Activated T-helper 1 cell treated with anti-CD3 and anti-CD28 coated beads, Interleukin-12 subunit alpha, Interleukin-12 subunit beta, Interleukin-2, Interleukin-4 antibody, amounts not matched to agents 30 ng/mL and 10 ng/mL and 1 ng/mL, durations not matched to agents 14 hours and 24 hours and 36 hours (primary cell): ENCODE measurements at regions of chr2 and their contacts with region 1.

Region 1: DNA sequence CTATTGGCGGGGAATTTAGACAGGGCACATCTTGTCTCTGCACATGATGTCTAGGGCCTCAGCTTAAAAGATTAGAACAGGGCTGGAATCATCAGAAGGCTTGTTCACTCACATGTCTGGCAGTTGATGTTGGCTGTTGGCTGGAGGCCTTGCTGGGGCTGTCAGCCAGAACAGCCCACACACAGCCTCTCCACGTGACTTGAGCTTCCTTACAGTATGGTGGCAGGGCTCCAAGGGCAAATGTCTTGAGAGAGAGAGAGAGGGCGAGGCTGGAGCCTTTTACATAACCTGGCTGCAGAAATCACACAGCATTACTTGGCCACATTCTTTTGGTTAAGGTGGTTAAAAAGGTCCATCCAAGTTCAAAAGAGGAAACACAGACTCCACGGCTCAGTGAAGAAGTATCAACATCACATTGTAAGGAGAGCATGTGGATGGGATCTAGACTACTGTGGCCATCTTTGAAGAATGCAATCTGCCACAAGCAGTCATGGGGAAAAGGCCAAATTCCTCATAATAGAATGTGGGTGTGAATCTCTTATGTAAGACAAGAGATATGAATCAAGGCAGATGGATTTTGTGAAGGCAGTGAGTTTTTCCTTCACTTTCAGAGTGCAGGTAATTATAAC is 30.4 kb downstream of the SRSF7 start:
- DNase-seq: no peak
- H3K4me3 Mint-ChIP-seq: peak overlapping the region; percentile 40
- H3K27ac Mint-ChIP-seq: peak overlapping the region; percentile 87
- H3K4me1 Mint-ChIP-seq: peaks cover 59% of the 10 kb centered on the region
- H3K27me3 Mint-ChIP-seq: no peaks in the 10 kb centered on the region

Region 2: DNA sequence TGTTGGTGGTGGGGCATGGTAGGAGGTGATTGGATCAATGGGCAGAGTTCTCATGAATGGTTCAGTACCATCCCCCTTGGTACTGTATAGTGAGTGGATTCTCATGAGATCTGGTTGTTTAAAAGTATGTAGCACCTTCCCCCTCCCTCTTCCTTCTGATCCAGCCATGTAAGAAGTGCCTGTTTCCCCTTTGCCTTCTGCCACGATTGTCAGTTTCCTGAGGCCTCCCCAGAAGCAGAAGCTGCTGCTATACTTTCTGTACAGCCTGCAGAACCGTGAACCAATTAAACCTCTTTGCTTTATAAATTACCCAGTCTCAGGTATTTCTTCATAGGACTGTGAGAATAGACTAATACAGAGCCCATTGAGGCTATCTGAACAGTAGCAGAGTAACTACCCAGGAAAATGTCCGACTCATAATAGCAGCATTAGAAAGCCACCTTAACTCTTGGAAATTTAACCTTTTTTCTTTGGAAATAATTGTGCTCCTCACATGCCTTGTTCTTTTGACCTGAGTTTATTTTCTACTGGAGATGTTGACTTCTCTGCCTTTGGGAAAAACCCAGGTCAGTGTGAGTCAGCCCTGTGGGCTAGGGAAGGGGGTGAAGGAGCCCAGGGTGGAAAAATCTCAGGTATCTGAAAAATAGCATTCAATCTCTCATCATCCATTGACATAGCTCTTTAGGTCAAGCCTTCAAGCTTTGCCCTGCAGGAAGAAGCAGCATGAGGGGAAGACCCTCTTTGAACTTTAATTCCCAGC is 662.9 kb before region 1 on chr2:
- intact Hi-C with region 1: no loop called
- DNase-seq: no peak
- H3K4me3 Mint-ChIP-seq: no peak overlapping the region
- H3K27ac Mint-ChIP-seq: peak overlapping the region; percentile 8
- H3K4me1 Mint-ChIP-seq: peaks cover 24% of the 10 kb centered on the region
- H3K27me3 Mint-ChIP-seq: peaks cover 12% of the 10 kb centered on the region

Region 3: GRCh38 chr2:38315707-38316333 is 404.9 kb before region 1 on chr2:
- intact Hi-C with region 1: loop called (anchors 5 kb)
- DNase-seq: peak; percentile 16
- H3K4me3 Mint-ChIP-seq: no peak overlapping the region
- H3K27ac Mint-ChIP-seq: no peak overlapping the region
- H3K4me1 Mint-ChIP-seq: peaks cover 19% of the 10 kb centered on the region
- H3K27me3 Mint-ChIP-seq: no peaks in the 10 kb centered on the region

Region 4: DNA sequence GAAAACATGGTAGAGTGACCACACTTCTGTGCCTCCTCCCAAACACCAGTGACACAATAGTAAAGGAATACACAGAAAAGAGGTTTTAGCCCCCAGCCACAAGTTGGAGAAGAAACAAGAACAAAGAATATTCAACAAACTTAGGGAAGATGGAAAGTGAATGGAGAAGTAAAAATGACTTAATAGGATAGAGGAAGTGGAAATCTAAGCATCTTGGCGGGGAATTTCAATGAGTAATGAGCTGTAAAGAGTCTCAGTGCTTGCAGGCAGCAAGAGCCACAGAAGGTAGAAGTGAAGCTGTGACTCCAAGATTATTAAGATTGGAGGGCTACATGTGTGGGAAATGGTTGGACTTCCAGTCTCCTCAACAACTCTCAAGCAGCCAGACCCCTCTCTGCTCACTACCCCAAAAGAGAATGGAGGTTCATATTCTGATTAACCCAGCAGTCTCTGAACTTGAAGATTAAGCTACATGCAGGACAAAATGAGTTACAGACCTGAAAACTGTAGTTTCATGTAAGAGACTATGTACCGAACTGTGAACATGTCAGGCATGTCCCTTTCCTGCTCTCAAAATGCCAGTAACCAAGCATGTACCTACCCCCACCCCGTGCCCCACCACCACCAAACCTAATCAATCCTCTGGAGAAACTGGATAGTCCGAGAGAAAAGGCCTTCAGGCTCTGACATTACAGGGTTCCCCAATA is 101.1 kb before region 1 on chr2:
- intact Hi-C with region 1: loop called (anchors 2 kb)
- DNase-seq: no peak
- H3K4me3 Mint-ChIP-seq: no peak overlapping the region
- H3K27ac Mint-ChIP-seq: no peak overlapping the region
- H3K4me1 Mint-ChIP-seq: peaks cover 31% of the 10 kb centered on the region
- H3K27me3 Mint-ChIP-seq: peaks cover 2% of the 10 kb centered on the region

Region 5: GRCh38 chr2:38665854-38666555 is 54.7 kb before region 1 on chr2 and contains the start of gene GALM:
- intact Hi-C with region 1: loop called (anchors 1 kb)
- DNase-seq: peak; percentile 54
- H3K4me3 Mint-ChIP-seq: peak within 1 kb of the TSS; percentile 93
- H3K27ac Mint-ChIP-seq: peak within 1 kb of the TSS; percentile 94
- H3K4me1 Mint-ChIP-seq: peaks cover 69% of the 10 kb centered on the region
- H3K27me3 Mint-ChIP-seq: no peaks in the 10 kb centered on the region
- total RNA-seq, gene GALM: 77.0 and 78.4 TPM in 2 replicates

Region 6: DNA sequence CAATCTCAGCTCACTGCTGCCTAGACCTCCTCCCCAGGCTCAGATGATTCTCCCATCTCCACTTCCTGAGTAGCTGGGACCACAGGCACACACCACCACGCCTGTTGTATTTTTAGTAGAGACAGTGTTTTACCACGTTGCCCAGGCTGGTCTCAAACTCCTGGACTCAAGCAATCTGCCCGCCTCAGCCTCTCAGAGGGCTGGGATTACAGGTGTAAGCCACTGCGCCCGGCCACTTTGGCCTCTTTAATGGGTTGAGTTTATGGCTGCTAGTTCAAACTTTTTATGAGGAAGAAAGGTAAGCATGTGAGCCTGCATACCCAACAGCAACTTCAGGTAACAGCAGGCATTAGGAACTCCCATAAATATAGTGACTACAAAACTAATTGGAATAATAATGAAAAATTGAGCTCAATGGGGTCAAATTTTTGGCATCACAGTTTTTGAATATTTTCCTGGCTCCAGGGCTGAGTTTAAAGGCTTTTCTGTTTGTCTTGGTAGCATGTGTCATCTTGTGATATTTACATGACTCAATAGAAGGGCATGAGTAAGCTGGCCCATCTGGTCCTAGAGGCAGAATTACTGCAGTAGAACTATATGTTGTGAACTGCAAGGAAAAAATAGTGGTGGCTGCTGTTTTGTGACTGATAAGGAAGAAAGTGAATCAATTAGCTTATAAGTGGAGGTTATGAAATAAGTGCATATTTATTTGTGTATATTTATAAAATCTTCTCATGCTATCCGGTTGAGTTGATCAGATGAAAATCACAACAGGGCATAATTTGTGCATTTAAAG is 30.0 kb before region 1 on chr2:
- intact Hi-C with region 1: loop called (anchors 2 kb)
- DNase-seq: no peak
- H3K4me3 Mint-ChIP-seq: no peak overlapping the region
- H3K27ac Mint-ChIP-seq: peak overlapping the region; percentile 89
- H3K4me1 Mint-ChIP-seq: peaks cover 49% of the 10 kb centered on the region
- H3K27me3 Mint-ChIP-seq: no peaks in the 10 kb centered on the region

Region 7: GRCh38 chr2:38709567-38710194 is 11.0 kb before region 1 on chr2:
- intact Hi-C with region 1: loop called (anchors 1 kb)
- DNase-seq: peak; percentile 29
- H3K4me3 Mint-ChIP-seq: peak overlapping the region; percentile 66
- H3K27ac Mint-ChIP-seq: peak overlapping the region; percentile 95
- H3K4me1 Mint-ChIP-seq: peaks cover 77% of the 10 kb centered on the region
- H3K27me3 Mint-ChIP-seq: no peaks in the 10 kb centered on the region

Region 8: GRCh38 chr2:38815614-38816479 is 95.1 kb after region 1 on chr2:
- intact Hi-C with region 1: no loop called
- DNase-seq: no peak
- H3K4me3 Mint-ChIP-seq: no peak overlapping the region
- H3K27ac Mint-ChIP-seq: no peak overlapping the region
- H3K4me1 Mint-ChIP-seq: no peaks in the 10 kb centered on the region
- H3K27me3 Mint-ChIP-seq: no peaks in the 10 kb centered on the region